Esophagus muscularis mucosa (tissue), 4 donors: ENCODE measurements at regions of chr1 and their contacts with region 1.

Region 1: GRCh38 chr1:31663622-31664452 is 19.2 kb upstream of the PEF1 start:
- DNase-seq: no peak
- H3K4me3 ChIP-seq: no peak overlapping the region
- H3K27ac ChIP-seq: peak overlapping the region in 1 of 4 donors; percentile 2
- H3K4me1 ChIP-seq: peaks cover 13 to 51% (median 38%) of the 10 kb centered on the region in 4 donors
- H3K27me3 ChIP-seq: no peaks in the 10 kb centered on the region
- CTCF ChIP-seq: peak; percentile 94 to 99 (median 98)
- EP300 ChIP-seq: no peak
- POLR2A ChIP-seq: no peak

Region 2: GRCh38 chr1:31715087-31715872 is 51.4 kb after region 1 on chr1:
- intact Hi-C with region 1: loop called (anchors 2 kb)
- DNase-seq: peak; percentile 99
- H3K4me3 ChIP-seq: peak overlapping the region; percentile 55 to 61 (median 56)
- H3K27ac ChIP-seq: peak overlapping the region; percentile 96 to 97 (median 96)
- H3K4me1 ChIP-seq: peaks cover 35 to 57% (median 52%) of the 10 kb centered on the region in 4 donors
- H3K27me3 ChIP-seq: no peaks in the 10 kb centered on the region
- CTCF ChIP-seq: peak; percentile 92 to 99 (median 94)
- EP300 ChIP-seq: no peak
- POLR2A ChIP-seq: no peak

Region 3: GRCh38 chr1:31745096-31745945 is 81.5 kb after region 1 on chr1:
- intact Hi-C with region 1: loop called (anchors 2 kb)
- DNase-seq: no peak
- H3K4me3 ChIP-seq: no peak overlapping the region
- H3K27ac ChIP-seq: no peak overlapping the region
- H3K4me1 ChIP-seq: peaks cover 0 to 20% (median 10%) of the 10 kb centered on the region in 4 donors
- H3K27me3 ChIP-seq: no peaks in the 10 kb centered on the region
- CTCF ChIP-seq: peak; percentile 57 to 77 (median 77)
- EP300 ChIP-seq: no peak
- POLR2A ChIP-seq: no peak

Region 4: DNA sequence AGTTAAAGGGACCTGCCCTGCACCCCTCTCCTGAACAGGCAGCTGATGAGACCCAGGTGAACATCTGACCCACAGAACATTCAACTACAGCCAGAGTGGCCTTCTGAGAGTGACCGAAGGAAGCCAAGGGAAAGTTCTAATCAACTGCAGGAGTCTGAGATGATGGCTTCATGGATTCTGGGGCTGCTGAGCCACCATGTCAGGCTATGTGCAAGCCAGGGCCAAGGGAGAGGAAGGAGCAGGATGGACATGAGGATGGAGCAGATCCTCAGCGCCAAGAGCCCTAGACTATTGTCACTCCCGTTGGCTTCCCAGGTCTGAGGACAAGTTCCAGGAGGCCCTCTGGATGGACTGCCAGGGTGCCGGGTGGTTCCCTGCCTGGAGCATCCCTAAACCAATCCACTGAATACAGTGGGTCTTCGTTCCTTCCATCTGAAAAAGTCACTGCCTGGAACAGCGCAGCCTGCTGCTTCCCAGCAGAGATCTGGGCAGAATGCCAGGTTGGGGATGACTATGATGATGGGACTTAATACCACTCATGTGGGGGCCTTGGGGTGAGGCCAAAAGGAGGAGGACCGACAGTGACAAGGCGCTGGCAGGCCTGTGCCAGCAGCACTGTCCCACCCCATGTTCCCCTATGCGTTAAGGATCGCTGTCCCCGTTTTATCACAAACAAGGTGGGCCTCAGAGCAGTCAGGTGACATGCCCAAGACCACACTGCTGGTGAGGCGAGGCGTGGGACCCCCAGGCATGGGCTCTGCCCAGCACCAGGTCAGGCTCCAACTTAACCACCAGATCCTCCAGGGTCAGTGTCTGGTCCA is 132.2 kb after region 1 on chr1:
- intact Hi-C with region 1: no loop called
- DNase-seq: no peak
- H3K4me3 ChIP-seq: no peak overlapping the region
- H3K27ac ChIP-seq: no peak overlapping the region
- H3K4me1 ChIP-seq: peaks cover 0 to 7% (median 0%) of the 10 kb centered on the region in 4 donors
- H3K27me3 ChIP-seq: peaks cover 0 to 48% (median 0%) of the 10 kb centered on the region in 4 donors
- CTCF ChIP-seq: no peak
- EP300 ChIP-seq: no peak
- POLR2A ChIP-seq: no peak